ENCODE measurements at regions of chr15 and their contacts with region 1.

Region 1: GRCh38 chr15:66619151-66619903 is 53.5 kb upstream of the LCTL start:
- DNase-seq: peak; percentile 93

Region 2: GRCh38 chr15:66702035-66702786 is 82.9 kb after region 1 on chr15 and contains the start of gene SMAD6:
- intact Hi-C with region 1: loop called (anchors 5 to 10 kb)
- DNase-seq: peak; percentile 99
- total RNA-seq, gene SMAD6: 17.4 to 18.4 TPM